Breast epithelium (tissue), 4 donors: ENCODE measurements at regions of chr17 and their contacts with region 1.

Region 1: DNA sequence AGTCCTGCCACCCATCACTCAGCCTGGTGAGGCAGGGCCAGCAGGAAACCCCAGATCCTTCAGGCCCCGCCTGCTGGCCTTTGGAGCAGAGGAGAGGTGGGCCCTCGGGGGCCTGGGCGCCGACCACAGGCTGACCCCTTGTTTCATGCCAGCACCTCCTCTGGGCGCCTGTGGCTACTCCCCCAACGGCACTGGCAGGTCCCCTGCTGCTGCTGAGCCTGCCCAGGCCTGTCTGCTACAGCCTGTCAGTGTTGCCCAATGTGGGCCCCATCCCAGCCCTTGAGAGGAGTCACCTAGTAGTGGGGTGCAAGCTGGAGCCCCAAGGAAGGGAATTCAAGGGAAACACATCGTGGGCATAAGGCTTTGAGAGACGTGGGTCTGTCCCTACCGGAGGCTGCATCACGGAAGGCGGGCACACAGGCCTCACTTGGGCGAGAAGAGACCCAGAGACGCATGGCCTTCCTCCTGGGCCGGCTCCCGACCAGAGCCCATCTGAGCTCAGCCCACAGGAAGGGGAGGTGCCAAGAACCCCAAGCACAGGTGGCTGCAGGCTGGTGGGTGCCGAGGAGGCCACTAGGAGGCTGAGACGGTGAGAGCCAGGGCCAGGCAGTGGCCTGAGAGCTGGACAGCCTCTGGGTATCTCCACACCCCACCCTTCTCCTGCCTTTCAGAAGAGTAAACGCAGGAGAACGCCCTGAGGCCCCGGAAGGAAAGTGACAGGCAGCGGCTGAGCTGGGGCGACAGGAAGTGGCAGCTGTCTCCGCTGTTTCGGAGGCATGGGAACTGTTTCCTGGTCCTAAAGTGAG is 8.0 kb upstream of the FASN start:
- DNase-seq: peak; percentile 63 to 88
- H3K4me3 ChIP-seq: peak overlapping the region; percentile 17 to 57 (median 32)
- H3K27ac ChIP-seq: peak overlapping the region; percentile 95 to 97
- H3K4me1 ChIP-seq: peaks cover 33 to 45% of the 10 kb centered on the region in 2 donors
- H3K27me3 ChIP-seq: no peaks in the 10 kb centered on the region
- CTCF ChIP-seq: peak; percentile 28 to 48 (median 31)
- POLR2A ChIP-seq: no peak

Region 2: GRCh38 chr17:81607431-81607830 is 498.7 kb before region 1 on chr17:
- intact Hi-C with region 1: no loop called
- DNase-seq: no peak
- H3K4me3 ChIP-seq: no peak overlapping the region
- H3K27ac ChIP-seq: no peak overlapping the region
- H3K4me1 ChIP-seq: no peaks in the 10 kb centered on the region
- H3K27me3 ChIP-seq: no peaks in the 10 kb centered on the region
- CTCF ChIP-seq: no peak
- POLR2A ChIP-seq: no peak

Region 3: GRCh38 chr17:82077617-82078358 is 28.3 kb before region 1 on chr17:
- intact Hi-C with region 1: no loop called
- DNase-seq: peak in 1 of 2 donors; percentile 64
- H3K4me3 ChIP-seq: peak overlapping the region in 1 of 3 donors; percentile 35
- H3K27ac ChIP-seq: peak overlapping the region; percentile 50 to 82
- H3K4me1 ChIP-seq: no peaks in the 10 kb centered on the region
- H3K27me3 ChIP-seq: no peaks in the 10 kb centered on the region
- CTCF ChIP-seq: no peak
- POLR2A ChIP-seq: no peak

Region 4: GRCh38 chr17:82134101-82134500 is 28.0 kb after region 1 on chr17:
- intact Hi-C with region 1: loop called (anchors 1 kb)
- DNase-seq: peak; percentile 67 to 68
- H3K4me3 ChIP-seq: peak overlapping the region in 1 of 3 donors; percentile 22
- H3K27ac ChIP-seq: peak overlapping the region; percentile 84 to 94
- H3K4me1 ChIP-seq: no peaks in the 10 kb centered on the region
- H3K27me3 ChIP-seq: no peaks in the 10 kb centered on the region
- CTCF ChIP-seq: no peak
- POLR2A ChIP-seq: no peak

Region 5: DNA sequence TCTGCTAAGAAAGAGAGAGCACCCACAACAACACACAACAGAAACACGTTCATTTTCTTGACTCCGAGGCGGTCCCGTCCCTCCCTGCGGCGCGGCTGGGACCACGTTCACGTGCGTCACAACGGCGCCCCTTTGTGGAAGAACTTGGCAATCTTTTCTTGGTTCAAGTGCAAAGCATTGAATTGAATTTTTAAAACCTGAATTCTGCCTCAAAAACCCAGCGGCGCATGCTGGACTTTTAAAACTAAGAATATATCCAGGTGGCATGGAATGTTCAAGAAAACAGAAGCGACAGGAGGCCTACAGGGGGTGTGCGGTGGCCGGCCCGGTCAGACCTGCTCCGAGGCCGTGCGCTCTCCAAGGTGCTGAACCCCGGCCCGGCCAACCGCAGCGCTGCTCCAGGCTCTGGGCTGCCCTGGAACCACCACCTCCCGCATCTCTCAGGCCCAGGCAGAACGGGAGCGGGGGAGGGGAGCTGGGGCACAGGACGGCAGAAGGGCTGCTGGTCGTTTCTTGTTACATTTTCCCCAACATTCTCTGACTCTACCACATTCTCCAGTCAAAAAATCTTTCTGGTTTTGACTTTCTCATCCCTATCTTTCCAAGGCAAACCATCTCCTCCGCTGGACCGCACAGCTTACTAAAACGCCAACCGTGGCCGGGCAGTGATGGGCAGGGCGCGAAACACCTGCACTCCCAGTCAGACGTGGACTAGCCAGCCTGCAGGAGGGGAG is 308.6 kb after region 1 on chr17:
- intact Hi-C with region 1: no loop called
- DNase-seq: peak; percentile 43 to 75
- H3K4me3 ChIP-seq: no peak overlapping the region
- H3K27ac ChIP-seq: no peak overlapping the region
- H3K4me1 ChIP-seq: peaks cover 2 to 6% of the 10 kb centered on the region in 2 donors
- H3K27me3 ChIP-seq: no peaks in the 10 kb centered on the region
- CTCF ChIP-seq: peak; percentile 20 to 74 (median 57)
- POLR2A ChIP-seq: no peak